ENCODE measurements at regions of chr16 and their contacts with region 1.

Region 1: DNA sequence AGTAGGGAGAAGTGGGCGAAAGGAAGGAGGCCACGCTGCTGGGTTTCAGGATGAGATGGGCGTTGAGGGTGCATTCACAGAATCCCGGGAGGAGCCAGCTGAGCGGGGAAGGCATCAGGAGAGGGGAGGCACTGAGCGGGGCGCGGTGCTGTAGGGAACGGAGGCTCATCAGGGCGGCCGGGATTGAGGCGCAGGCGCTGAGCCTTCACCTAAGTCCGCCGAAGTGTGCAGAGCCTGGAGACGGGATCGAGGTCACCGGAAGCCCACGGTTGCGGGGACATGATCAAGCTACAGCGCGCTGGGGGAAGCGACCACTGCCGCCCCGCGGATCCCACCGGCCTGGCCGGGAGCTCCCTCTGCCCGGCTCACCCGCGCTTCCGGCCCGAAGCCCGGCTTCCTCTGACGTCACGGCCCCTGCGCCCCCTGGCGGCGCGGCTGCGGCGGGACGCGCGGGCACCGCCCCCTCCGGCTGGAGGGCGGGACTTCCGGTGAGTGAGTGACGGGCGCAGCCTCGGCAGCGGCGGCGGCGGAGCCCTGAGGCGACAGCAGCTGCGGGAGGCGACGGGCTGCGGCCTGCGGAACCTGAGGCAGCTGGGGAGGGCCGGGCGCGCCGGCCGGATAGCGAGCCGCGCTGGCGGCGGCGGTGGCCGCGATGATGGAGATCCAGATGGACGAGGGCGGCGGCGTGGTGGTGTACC is at the start of gene MAPK8IP3:
- DNase-seq: peak; percentile 93
- H3K4me3 ChIP-seq: peak within 1 kb of the TSS; percentile 94
- H3K27ac ChIP-seq: peak within 1 kb of the TSS; percentile 89
- H3K4me1 ChIP-seq: peaks cover 12% of the 10 kb centered on the region
- H3K27me3 ChIP-seq: no peaks in the 10 kb centered on the region
- CTCF ChIP-seq: peak; percentile 63
- total RNA-seq, gene MAPK8IP3: 66.9 and 69.2 TPM in 2 replicates

Region 2: GRCh38 chr16:1378804-1379303 is 327.0 kb before region 1 on chr16:
- CTCF ChIA-PET with region 1: interaction called, 11 read pairs
- POLR2A ChIA-PET with region 1: no interaction called
- intact Hi-C with region 1: no loop called
- DNase-seq: peak; percentile 54
- H3K4me3 ChIP-seq: peak overlapping the region; percentile 90
- H3K27ac ChIP-seq: peak overlapping the region; percentile 97
- H3K4me1 ChIP-seq: peaks cover 16% of the 10 kb centered on the region
- H3K27me3 ChIP-seq: no peaks in the 10 kb centered on the region
- CTCF ChIP-seq: no peak

Region 3: GRCh38 chr16:1691276-1691675 is 14.6 kb before region 1 on chr16:
- CTCF ChIA-PET with region 1: interaction called, 10 read pairs
- POLR2A ChIA-PET with region 1: no interaction called
- intact Hi-C with region 1: no loop called
- DNase-seq: no peak
- H3K4me3 ChIP-seq: no peak overlapping the region
- H3K27ac ChIP-seq: no peak overlapping the region
- H3K4me1 ChIP-seq: no peaks in the 10 kb centered on the region
- H3K27me3 ChIP-seq: no peaks in the 10 kb centered on the region
- CTCF ChIP-seq: no peak

Region 4: GRCh38 chr16:1723450-1724147 is 17.8 kb after region 1 on chr16:
- CTCF ChIA-PET with region 1: interaction called, 17 read pairs
- POLR2A ChIA-PET with region 1: no interaction called
- intact Hi-C with region 1: no loop called
- DNase-seq: peak; percentile 41
- H3K4me3 ChIP-seq: no peak overlapping the region
- H3K27ac ChIP-seq: no peak overlapping the region
- H3K4me1 ChIP-seq: peaks cover 3% of the 10 kb centered on the region
- H3K27me3 ChIP-seq: no peaks in the 10 kb centered on the region
- CTCF ChIP-seq: peak; percentile 79

Region 5: DNA sequence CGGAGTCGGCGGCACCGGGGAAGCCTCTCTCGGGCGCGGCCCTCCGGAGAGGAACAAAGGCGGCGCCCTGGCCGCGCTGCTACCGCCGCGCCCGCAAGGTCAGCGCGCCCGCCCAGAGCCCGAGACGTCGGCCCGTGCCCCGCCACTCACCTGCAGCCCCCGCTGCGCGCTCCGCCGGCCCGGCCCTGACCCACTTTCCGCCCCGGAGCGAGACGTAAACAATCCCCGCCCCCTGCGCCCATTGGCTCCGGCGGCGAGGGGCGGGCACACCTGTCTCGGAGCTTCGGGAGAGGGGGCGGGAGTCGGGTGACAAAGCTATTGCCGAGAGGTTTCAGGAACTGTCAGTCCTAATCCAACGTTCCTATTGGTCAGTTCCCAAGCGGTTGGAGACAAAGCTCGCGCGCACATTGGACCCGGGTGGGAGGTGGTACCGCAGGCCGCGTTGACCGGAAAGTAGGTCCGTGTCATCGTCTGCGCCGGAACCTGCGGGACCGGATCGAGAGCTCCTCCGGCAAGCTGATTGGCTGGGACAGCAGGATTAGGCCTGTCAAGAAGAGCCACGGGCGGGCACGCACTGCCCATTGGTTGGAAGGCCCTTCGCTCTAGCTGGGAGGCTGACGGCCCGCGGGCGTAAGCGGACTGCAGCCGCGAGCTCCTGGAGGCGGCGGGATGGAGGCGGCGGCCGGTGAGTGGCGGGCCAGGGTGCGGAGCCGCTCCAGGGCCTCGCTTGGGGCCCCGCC is 76.7 kb after region 1 on chr16 and contains the starts of genes NUBP2 and SPSB3:
- CTCF ChIA-PET with region 1: no interaction called
- POLR2A ChIA-PET with region 1: interaction called, 14 read pairs
- intact Hi-C with region 1: no loop called
- DNase-seq: peak; percentile 100
- H3K4me3 ChIP-seq: peak within 1 kb of the TSS; percentile 90
- H3K27ac ChIP-seq: peak within 1 kb of the TSS; percentile 86
- H3K4me1 ChIP-seq: no peaks in the 10 kb centered on the region
- H3K27me3 ChIP-seq: no peaks in the 10 kb centered on the region
- CTCF ChIP-seq: no peak
- total RNA-seq, gene NUBP2: 76.0 and 76.6 TPM in 2 replicates
- total RNA-seq, gene SPSB3: 15.0 and 20.8 TPM in 2 replicates

Region 6: GRCh38 chr16:1820096-1820945 is 114.5 kb after region 1 on chr16:
- CTCF ChIA-PET with region 1: no interaction called
- POLR2A ChIA-PET with region 1: no interaction called
- intact Hi-C with region 1: no loop called
- DNase-seq: no peak
- H3K4me3 ChIP-seq: no peak overlapping the region
- H3K27ac ChIP-seq: no peak overlapping the region
- H3K4me1 ChIP-seq: no peaks in the 10 kb centered on the region
- H3K27me3 ChIP-seq: no peaks in the 10 kb centered on the region
- CTCF ChIP-seq: no peak